ENCODE measurements at regions of chr5 and their contacts with region 1.

Region 1: DNA sequence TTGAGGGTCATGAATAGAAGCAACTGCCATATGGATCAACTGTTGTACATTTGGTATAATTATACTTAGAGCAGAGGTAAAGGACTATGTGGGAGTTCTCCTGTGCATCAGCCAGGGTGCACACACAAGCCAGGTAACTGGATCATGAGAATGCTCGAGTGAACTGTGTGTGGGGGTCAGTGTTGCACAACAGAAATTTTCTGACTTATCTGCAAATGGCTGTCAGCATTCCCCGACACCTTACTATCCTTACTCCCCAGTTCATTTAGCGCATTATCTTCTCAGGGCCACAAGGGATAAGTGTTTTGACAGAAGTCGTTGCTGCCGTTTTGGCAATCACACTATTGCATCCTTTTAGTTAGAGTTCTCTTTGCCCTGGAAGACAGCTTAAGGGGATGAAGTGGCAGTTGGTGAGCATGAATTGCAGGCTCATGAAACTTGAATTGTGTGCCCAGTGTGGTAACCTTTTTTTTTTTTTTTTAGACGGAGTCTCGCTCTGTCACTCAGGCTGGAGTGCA is 1.7 kb downstream of the CANX start:
- DNase-seq: no peak

Region 2: GRCh38 chr5:179438011-179438441 is 262.4 kb before region 1 on chr5:
- in situ Hi-C with region 1: no loop called
- DNase-seq: no peak

Region 3: GRCh38 chr5:179509239-179509638 is 191.2 kb before region 1 on chr5:
- in situ Hi-C with region 1: no loop called
- DNase-seq: no peak

Region 4: DNA sequence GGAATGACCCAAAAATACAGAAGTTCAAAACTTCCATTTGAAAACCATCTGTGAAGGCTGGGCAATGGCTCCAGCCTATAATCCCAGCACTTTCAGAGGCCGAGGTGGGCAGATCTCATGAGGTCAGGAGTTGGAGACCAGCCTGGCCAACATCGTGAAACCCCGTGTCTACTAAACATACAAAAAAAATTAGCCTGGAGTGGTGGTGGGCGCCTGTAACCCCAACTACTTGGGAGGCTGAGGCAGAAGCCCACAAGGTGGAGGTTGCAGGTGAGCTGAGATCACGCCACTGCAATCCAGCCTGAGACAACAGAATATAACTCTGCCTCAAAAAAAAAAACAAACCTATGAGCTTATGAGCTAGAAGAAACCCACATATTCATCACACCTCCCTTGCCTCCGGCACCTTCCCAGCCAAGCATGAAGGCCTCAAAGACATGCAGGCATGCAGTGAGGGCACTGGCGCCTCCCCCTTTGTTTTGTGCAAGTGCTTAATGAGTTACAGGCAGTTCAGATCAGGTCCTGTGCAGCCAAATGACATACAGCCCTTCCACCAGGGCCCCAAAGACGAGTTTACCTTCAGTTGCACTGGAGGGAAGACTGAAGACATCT is 86.9 kb before region 1 on chr5:
- in situ Hi-C with region 1: loop called (anchors 5 kb)
- DNase-seq: no peak

Region 5: DNA sequence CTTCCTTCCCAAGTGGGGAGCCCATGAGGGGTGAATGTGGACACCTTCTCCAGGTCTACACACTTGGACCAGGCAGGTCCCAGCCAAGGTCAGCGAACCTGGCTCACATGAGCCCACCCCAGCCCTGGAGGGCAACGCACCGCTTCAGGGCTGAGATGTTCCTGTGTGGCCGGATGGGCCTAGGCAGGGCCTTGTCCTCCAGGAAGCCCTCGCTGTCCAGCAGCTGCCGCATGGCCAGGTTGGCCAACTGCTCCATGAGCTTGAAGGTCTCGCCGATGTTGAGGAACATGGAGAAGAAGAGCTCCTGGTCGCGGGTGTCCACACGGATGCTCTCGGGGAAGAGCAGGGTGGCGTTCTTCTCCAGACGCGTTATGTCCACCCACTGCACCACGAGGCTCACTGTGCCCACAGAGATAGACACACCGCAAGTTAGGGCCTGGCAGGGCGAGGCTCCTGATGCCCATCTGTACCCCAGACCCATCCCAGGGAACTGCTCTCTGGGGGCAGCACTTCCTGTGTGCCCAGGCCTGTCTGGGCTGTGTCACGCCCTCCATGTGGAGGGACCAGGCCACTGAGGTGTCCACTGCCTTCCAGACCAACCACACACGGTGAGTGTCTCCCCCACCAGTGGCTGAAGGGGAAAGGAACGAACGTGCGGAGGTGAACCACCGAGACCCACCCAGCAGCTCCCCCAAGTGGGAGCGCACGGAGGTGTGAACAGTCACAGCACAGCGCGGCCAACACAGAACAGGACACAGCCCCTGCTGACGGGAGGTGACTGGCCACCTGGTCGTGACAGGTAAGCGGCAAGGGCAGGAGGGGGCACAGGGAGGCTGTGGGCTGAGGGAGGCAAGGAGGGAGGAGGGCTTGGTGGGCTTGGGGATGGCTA is 192.9 kb after region 1 on chr5:
- in situ Hi-C with region 1: no loop called
- DNase-seq: peak; percentile 30

Measured in G401 (cell line).